ENCODE measurements at regions of chr1 and their contacts with region 1.

Region 1: GRCh38 chr1:229109320-229109761 is 161.6 kb upstream of the RAB4A start:
- DNase-seq: peak; percentile 35 to 81
- H3K4me3 ChIP-seq: no peak overlapping the region
- H3K27ac ChIP-seq: peak overlapping the region; percentile 86 to 88
- H3K4me1 ChIP-seq: peaks cover 27 to 59% of the 10 kb centered on the region in 2 donors
- H3K27me3 ChIP-seq: no peaks in the 10 kb centered on the region
- CTCF ChIP-seq: no peak

Region 2: DNA sequence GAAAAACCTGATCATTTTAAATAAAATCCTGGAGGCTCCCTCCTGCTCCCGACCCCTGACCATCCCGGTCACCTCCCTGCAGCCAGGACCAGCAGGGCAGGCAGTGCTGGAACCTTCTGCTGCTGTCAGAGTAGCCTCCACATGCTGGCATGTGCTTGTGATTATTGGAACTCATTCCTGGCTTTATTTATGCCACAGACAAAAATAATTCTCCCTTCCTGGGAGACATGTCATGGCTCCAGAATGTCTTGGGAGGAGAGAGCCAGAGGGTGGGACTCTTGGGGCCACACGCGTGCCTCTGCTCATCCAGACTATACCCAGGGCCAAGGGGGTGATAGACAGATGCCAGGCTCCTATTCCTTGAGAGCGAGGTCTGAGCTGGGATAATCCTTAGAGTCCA is 22.0 kb before region 1 on chr1:
- intact Hi-C with region 1: loop called (anchors 2 kb)
- DNase-seq: peak in 1 of 2 donors; percentile 80
- H3K4me3 ChIP-seq: no peak overlapping the region
- H3K27ac ChIP-seq: peak overlapping the region; percentile 79 to 84
- H3K4me1 ChIP-seq: peaks cover 6 to 41% of the 10 kb centered on the region in 2 donors
- H3K27me3 ChIP-seq: no peaks in the 10 kb centered on the region
- CTCF ChIP-seq: no peak